OCI-LY7 (cell line): ENCODE measurements at regions of chr9 and their contacts with region 1.

Region 1: DNA sequence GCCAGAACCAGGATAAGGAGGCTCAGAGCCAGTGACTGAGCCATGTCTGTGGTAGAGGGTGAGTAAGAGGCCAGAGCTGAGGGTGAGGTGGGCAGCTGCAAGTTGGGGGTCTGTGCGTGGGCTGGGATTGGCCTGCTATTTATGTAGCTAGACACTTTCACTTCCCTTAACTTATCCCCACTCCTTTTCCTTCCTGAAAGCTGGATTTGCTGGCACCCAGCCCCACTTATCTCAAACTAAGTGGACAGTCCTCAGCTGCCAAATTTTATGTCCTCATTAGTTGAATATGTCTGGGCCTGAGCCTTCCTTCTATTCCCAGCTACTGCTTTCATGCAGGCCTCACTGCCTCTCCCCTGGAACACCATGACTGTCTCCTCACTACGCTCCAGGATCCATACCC is at the start of gene CCL21:
- DNase-seq: no peak
- H3K4me3 ChIP-seq: no peak within 1 kb of the TSS
- H3K27ac ChIP-seq: no peak within 1 kb of the TSS
- H3K4me1 ChIP-seq: no peaks in the 10 kb centered on the region
- CTCF ChIP-seq: no peak
- total RNA-seq, gene CCL21: not detected in 2 replicates

Region 2: DNA sequence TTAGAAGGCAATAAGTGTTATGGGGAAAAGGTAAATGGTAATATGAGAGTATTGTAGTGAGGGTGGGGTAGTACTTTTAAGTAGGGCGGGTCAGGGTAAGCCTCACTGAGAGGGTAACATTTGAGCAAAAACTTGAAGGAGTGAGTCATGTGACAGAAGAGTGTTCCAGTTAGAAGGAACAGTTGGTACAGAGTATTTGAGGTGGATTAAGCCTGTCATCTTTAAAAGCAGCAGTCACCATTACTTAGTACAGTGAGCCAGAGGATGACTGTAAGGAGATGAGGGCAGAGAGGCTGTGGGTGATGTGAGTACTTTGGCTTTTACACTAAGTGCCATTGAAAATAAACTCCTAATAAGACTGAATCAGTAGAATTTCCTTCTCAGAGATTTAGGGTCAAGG is 476.4 kb before region 1 on chr9:
- CTCF ChIA-PET with region 1: no interaction called
- POLR2A ChIA-PET with region 1: no interaction called
- intact Hi-C with region 1: no loop called
- DNase-seq: no peak
- H3K4me3 ChIP-seq: no peak overlapping the region
- H3K27ac ChIP-seq: no peak overlapping the region
- H3K4me1 ChIP-seq: no peaks in the 10 kb centered on the region
- CTCF ChIP-seq: no peak

Region 3: DNA sequence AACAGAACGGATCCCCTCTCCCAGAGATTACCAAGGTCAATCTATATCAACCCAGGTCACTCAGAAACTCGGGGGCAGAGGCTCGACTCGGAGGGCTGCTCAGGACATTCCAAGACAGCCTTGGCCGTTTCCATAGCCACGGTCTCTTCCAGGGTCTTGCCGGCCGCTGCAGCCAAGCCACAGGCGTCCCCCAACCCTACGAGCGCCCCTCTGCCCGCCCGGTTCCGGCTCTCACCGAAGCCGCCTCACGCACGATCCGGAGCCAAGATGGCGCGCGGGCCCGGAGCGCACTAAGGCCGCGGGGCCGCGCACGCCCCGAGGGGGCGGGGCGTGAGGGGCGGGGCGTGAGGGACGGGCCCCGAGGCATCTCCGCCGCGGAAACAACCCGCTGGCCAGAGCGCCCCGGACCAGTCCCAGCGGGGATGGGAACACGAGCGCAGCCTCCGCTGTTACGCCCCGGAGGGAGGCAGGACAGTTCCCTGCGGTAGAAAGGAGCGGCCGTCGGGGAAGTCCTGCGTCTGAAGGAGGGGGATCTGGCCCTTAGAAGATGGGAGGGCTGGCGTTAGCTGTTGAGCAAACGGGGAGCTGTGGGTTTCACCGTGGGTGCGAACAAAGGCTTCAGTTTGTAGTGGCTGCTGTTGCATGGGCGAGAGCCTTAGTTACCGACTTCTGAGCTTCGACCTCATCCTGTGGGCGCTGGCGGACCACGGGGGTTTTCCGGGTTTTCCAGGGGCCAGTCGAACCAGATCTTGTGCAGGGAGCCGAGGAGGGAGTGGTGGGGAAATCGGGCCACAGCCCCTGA is 98.0 kb before region 1 on chr9 and contains the start of gene RPP25L:
- CTCF ChIA-PET with region 1: no interaction called
- POLR2A ChIA-PET with region 1: interaction called, 13 read pairs
- intact Hi-C with region 1: no loop called
- DNase-seq: peak; percentile 89
- H3K4me3 ChIP-seq: peak within 1 kb of the TSS; percentile 91
- H3K27ac ChIP-seq: peak within 1 kb of the TSS; percentile 36
- H3K4me1 ChIP-seq: peaks cover 21% of the 10 kb centered on the region
- CTCF ChIP-seq: 0 out of 2 replicates have a peak, but pooled peaks have one; percentile 3
- total RNA-seq, gene RPP25L: 33.6 and 40.3 TPM in 2 replicates

Region 4: GRCh38 chr9:34651876-34652601 is 58.0 kb before region 1 on chr9 and contains the start of gene IL11RA:
- CTCF ChIA-PET with region 1: no interaction called
- POLR2A ChIA-PET with region 1: no interaction called
- intact Hi-C with region 1: no loop called
- DNase-seq: peak; percentile 33
- H3K4me3 ChIP-seq: no peak within 1 kb of the TSS
- H3K27ac ChIP-seq: no peak within 1 kb of the TSS
- H3K4me1 ChIP-seq: peaks cover 14% of the 10 kb centered on the region
- CTCF ChIP-seq: no peak
- total RNA-seq, gene IL11RA: 16.2 and 16.7 TPM in 2 replicates